AG04450 (cell line): ENCODE measurements at regions of chr5 and their contacts with region 1.

Region 1: GRCh38 chr5:94968507-94969095 is 316.3 kb downstream of the MCTP1 start:
- DNase-seq: peak; percentile 33
- H3K4me3 ChIP-seq: no peak overlapping the region
- H3K27ac ChIP-seq: no peak overlapping the region
- H3K27me3 ChIP-seq: no peaks in the 10 kb centered on the region
- CTCF ChIP-seq: peak; percentile 71

Region 2: GRCh38 chr5:94870511-94871183 is 98.0 kb before region 1 on chr5:
- CTCF ChIA-PET with region 1: no interaction called
- POLR2A ChIA-PET with region 1: no interaction called
- DNase-seq: no peak
- H3K4me3 ChIP-seq: no peak overlapping the region
- H3K27ac ChIP-seq: no peak overlapping the region
- H3K27me3 ChIP-seq: no peaks in the 10 kb centered on the region
- CTCF ChIP-seq: no peak

Region 3: DNA sequence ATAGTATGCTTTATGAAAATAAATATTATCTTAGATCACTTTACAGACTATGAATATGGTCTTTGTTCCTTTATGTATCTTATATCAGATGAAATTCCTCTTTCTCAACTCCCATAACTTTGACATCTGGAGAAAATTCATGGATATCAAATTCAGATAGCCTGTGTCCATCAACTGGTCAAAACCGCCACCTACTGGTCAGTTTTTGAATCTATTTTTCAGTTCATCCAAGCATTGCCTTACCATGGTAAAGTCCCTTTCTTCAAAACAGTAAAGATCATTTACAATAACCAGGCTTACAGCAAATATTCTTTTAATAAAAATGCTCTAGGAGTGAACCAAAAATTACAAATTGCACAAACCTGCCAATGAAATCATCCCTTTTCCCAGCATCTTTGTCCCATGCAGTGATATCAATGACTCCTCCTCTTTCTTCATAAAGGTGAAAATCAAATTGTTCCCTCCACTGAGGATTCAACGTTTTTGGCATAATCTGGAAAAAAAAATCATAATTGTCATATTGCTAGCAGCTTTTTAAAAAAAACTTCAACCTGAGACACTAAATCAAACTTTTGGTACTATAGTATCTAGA is 59.6 kb before region 1 on chr5:
- CTCF ChIA-PET with region 1: no interaction called
- POLR2A ChIA-PET with region 1: no interaction called
- DNase-seq: peak; percentile 8
- H3K4me3 ChIP-seq: no peak overlapping the region
- H3K27ac ChIP-seq: no peak overlapping the region
- H3K27me3 ChIP-seq: no peaks in the 10 kb centered on the region
- CTCF ChIP-seq: peak; percentile 71

Region 4: GRCh38 chr5:95043234-95043633 is 74.6 kb after region 1 on chr5:
- CTCF ChIA-PET with region 1: interaction called, 12 read pairs
- POLR2A ChIA-PET with region 1: no interaction called
- DNase-seq: no peak
- H3K4me3 ChIP-seq: no peak overlapping the region
- H3K27ac ChIP-seq: no peak overlapping the region
- H3K27me3 ChIP-seq: no peaks in the 10 kb centered on the region
- CTCF ChIP-seq: no peak

Region 5: GRCh38 chr5:95238560-95239325 is 270.1 kb after region 1 on chr5:
- CTCF ChIA-PET with region 1: interaction called, 36 read pairs
- POLR2A ChIA-PET with region 1: no interaction called
- DNase-seq: no peak
- H3K4me3 ChIP-seq: no peak overlapping the region
- H3K27ac ChIP-seq: no peak overlapping the region
- H3K27me3 ChIP-seq: no peaks in the 10 kb centered on the region
- CTCF ChIP-seq: peak; percentile 38

Region 6: DNA sequence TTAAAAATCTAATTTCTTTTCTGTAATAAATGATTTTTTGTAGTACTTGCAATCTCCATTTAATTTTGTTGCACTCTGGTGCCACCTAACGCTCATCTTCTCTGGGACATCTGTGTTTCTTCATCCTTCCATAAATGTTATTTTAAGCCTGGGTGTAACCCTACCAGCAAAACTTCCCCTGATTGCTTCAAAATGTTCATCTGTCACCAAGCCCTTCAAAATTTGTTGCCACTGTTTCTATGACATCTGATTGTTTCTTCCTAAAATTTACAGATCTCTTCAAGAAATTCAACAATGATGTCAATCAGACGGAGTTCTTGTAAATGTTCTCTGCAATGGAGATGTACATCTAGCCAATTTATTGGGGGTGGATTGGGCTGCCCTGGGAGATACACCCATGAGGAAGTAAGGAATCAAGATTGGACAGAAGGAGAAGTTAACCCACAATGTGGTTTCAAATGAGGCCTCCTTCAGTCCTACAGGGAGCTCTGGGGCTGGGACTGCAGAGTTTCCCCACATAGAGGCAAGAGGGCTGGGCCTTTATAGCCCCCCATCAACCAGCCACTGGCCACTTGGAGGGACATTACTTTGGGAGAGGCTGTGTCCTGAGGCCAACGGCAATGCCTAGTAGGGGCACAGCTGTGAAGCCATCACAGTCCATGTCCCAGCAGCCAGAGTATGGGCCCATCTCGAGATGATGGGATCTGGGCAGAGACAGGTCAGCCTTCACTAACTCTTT is 293.0 kb after region 1 on chr5:
- CTCF ChIA-PET with region 1: interaction called, 72 read pairs
- POLR2A ChIA-PET with region 1: no interaction called
- DNase-seq: no peak
- H3K4me3 ChIP-seq: no peak overlapping the region
- H3K27ac ChIP-seq: no peak overlapping the region
- H3K27me3 ChIP-seq: no peaks in the 10 kb centered on the region
- CTCF ChIP-seq: peak; percentile 57